Right lobe of liver (tissue), 6 donors: ENCODE measurements at regions of chr11 and their contacts with region 1.

Region 1: GRCh38 chr11:122628810-122629555 is 26.5 kb upstream of the UBASH3B start:
- DNase-seq: peak; percentile 58 to 63 (median 61)
- ATAC-seq: peak; percentile 90 to 96 (median 94)
- H3K4me3 ChIP-seq: no peak overlapping the region
- H3K27ac ChIP-seq: no peak overlapping the region
- H3K4me1 ChIP-seq: no peaks in the 10 kb centered on the region
- H3K27me3 ChIP-seq: no peaks in the 10 kb centered on the region
- CTCF ChIP-seq: peak; percentile 69 to 77 (median 74)
- POLR2A ChIP-seq: no peak

Region 2: DNA sequence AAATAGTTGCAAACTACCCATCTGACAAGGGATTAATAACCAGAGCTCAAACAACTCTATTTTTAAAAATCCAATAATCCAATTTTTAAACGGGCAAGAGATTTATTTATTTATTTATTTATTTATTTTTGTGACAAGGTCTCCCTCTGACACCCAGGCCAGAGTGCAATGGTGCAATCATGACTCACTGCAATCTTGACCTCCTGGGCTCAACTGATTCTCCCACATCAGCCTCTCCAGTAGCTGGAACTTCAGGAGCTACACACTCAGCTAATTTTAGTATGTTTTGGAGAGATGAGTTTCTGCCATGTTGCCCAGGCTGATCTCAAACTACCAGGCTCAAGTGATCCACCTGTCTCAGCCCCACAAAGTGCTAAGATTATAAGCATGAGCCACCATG is 245.8 kb before region 1 on chr11:
- intact Hi-C with region 1: no loop called
- DNase-seq: no peak
- ATAC-seq: peak in 1 of 4 donors; percentile 64
- H3K4me3 ChIP-seq: no peak overlapping the region
- H3K27ac ChIP-seq: no peak overlapping the region
- H3K4me1 ChIP-seq: no peaks in the 10 kb centered on the region
- H3K27me3 ChIP-seq: no peaks in the 10 kb centered on the region
- CTCF ChIP-seq: no peak
- POLR2A ChIP-seq: no peak

Region 3: GRCh38 chr11:122754553-122755322 is 125.8 kb after region 1 on chr11:
- intact Hi-C with region 1: loop called in 1 of 2 experiments (anchors 10 kb)
- DNase-seq: no peak
- ATAC-seq: peak; percentile 46 to 66 (median 54)
- H3K4me3 ChIP-seq: no peak overlapping the region
- H3K27ac ChIP-seq: no peak overlapping the region
- H3K4me1 ChIP-seq: peaks cover 0 to 5% (median 0%) of the 10 kb centered on the region in 4 donors
- H3K27me3 ChIP-seq: no peaks in the 10 kb centered on the region
- CTCF ChIP-seq: peak; percentile 37 to 44 (median 42)
- POLR2A ChIP-seq: no peak

Region 4: DNA sequence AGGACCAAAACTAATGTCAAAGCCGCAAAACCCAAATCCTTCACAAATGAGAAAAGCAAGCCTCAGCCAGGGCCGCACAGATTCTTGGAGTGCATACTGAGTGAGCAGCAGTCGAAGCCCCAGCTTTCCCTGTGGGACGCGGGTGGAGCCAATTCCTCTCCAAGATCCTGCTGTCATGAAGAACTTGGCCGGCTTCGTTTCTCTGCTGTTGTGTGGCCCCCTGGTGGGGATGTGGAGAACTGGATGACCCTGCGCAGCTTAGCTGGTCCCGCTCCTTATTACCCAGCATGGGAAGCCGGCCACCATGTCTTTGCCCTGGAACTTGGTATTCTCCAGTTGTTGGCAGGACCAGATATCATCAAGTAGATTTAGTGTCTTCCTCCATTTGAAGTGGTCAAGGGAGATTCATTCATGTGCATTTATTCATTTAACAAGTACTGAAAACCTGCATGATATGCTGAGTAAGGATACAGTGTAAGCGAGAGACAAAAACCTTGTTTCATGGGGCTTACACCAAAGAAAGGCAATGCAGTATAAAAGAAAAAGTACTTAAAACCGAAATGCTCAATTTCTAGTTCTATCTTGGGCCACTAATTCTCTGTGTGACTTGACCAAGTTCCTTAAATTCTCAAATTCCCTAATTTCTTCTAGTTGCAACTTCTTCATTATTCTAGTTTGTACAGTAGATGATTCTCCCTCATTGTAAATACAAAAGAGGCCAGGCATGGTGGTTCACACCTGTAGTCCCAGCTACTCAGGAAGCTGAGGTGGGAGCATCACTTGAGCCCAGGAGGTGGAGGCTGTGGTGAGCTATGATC is 152.6 kb after region 1 on chr11:
- intact Hi-C with region 1: loop called (anchors 5 kb)
- DNase-seq: peak; percentile 83 to 84 (median 84)
- ATAC-seq: peak; percentile 98 to 99 (median 98)
- H3K4me3 ChIP-seq: no peak overlapping the region
- H3K27ac ChIP-seq: no peak overlapping the region
- H3K4me1 ChIP-seq: no peaks in the 10 kb centered on the region
- H3K27me3 ChIP-seq: peaks cover 0 to 6% of the 10 kb centered on the region in 2 donors
- CTCF ChIP-seq: peak; percentile 87 to 95 (median 90)
- POLR2A ChIP-seq: no peak

Region 5: DNA sequence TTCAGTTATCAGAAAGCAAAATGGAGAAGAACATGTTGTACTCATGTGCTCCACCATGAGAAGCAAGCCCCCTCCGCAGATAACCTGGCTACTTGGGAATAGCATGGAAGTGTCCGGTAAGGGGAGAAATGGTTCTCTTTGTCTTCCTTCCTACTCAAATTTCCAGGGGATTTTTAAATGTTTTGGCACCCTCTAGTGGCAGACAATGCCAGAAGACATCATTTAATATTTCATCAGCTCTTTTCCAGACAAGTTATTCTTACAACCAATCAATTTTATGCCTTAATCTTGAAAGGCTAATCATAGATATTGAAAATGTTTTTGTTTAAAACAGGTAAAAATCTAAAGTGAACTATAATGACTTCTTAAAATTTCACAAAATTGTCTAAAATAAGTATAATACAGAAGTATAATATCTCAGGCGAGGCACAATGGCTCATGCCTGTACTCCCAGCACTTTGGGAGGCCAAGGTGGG is 225.0 kb after region 1 on chr11:
- intact Hi-C with region 1: loop called in 1 of 2 experiments (anchors 10 kb)
- DNase-seq: no peak
- ATAC-seq: peak; percentile 71 to 80 (median 74)
- H3K4me3 ChIP-seq: no peak overlapping the region
- H3K27ac ChIP-seq: no peak overlapping the region
- H3K4me1 ChIP-seq: no peaks in the 10 kb centered on the region
- H3K27me3 ChIP-seq: no peaks in the 10 kb centered on the region
- CTCF ChIP-seq: peak; percentile 66 to 74 (median 73)
- POLR2A ChIP-seq: no peak